ENCODE measurements at regions of chr12 and their contacts with region 1.

Region 1: GRCh38 chr12:31682136-31682962 is 22.9 kb downstream of the ETFBKMT start:
- DNase-seq: peak; percentile 80
- ATAC-seq: peak; percentile 91
- H3K4me3 Mint-ChIP-seq: no peak overlapping the region
- H3K27ac Mint-ChIP-seq: peak overlapping the region; percentile 65
- H3K4me1 Mint-ChIP-seq: peaks cover 12% of the 10 kb centered on the region
- H3K27me3 Mint-ChIP-seq: no peaks in the 10 kb centered on the region

Region 2: GRCh38 chr12:31029916-31030562 is 652.3 kb before region 1 on chr12:
- CTCF ChIA-PET with region 1: no interaction called
- DNase-seq: peak; percentile 35
- ATAC-seq: no peak
- H3K4me3 Mint-ChIP-seq: no peak overlapping the region
- H3K27ac Mint-ChIP-seq: no peak overlapping the region
- H3K4me1 Mint-ChIP-seq: no peaks in the 10 kb centered on the region
- H3K27me3 Mint-ChIP-seq: peaks cover 10% of the 10 kb centered on the region

Region 3: GRCh38 chr12:31589904-31590641 is 92.3 kb before region 1 on chr12:
- CTCF ChIA-PET with region 1: no interaction called
- DNase-seq: no peak
- ATAC-seq: peak; percentile 43
- H3K4me3 Mint-ChIP-seq: peak overlapping the region; percentile 62
- H3K27ac Mint-ChIP-seq: no peak overlapping the region
- H3K4me1 Mint-ChIP-seq: peaks cover 10% of the 10 kb centered on the region
- H3K27me3 Mint-ChIP-seq: peaks cover 52% of the 10 kb centered on the region

Region 4: DNA sequence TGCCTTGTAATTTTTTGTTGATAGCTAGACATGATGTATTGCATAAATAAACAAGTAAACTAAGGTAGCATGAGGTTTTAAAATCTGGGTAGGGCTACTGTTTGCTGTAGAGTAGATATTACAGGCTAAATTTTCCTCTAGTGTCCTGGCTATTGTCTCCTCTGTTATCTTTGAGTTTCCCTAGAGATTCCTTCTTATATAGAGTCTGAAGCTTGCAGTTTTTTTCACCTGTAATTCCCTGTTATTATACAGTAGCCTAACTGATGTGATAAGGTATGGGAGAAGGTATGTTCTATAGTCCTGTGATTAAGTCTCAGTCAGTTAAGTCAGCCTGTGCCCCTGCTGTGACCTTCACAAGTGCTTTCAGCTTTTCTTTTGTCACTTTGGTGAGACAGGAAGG is 13.3 kb before region 1 on chr12:
- CTCF ChIA-PET with region 1: interaction called, 11 read pairs
- DNase-seq: no peak
- ATAC-seq: no peak
- H3K4me3 Mint-ChIP-seq: no peak overlapping the region
- H3K27ac Mint-ChIP-seq: no peak overlapping the region
- H3K4me1 Mint-ChIP-seq: no peaks in the 10 kb centered on the region
- H3K27me3 Mint-ChIP-seq: no peaks in the 10 kb centered on the region

Region 5: DNA sequence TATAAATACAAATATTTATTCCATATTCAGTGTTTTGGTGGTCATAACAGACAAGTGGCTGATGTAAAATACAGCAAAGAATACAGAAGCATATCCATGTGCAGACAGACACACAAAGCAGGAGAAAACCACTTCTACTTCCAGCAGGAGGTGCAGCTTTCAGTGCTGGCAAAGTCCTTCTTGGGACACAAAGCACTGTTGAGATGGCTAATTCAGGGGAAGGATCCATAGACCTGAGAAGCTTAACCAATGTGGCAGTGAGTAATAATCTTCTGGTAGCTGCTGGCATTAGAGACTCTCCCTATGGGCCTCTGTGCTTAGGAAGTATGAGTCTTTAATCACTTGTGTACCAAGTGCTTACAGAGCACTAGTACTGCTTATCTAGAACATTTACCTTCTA is 19.7 kb after region 1 on chr12:
- CTCF ChIA-PET with region 1: interaction called, 10 read pairs
- DNase-seq: no peak
- ATAC-seq: no peak
- H3K4me3 Mint-ChIP-seq: no peak overlapping the region
- H3K27ac Mint-ChIP-seq: no peak overlapping the region
- H3K4me1 Mint-ChIP-seq: no peaks in the 10 kb centered on the region
- H3K27me3 Mint-ChIP-seq: no peaks in the 10 kb centered on the region

Region 6: GRCh38 chr12:31843398-31844095 is 161.2 kb after region 1 on chr12:
- CTCF ChIA-PET with region 1: no interaction called
- DNase-seq: no peak
- ATAC-seq: no peak
- H3K4me3 Mint-ChIP-seq: no peak overlapping the region
- H3K27ac Mint-ChIP-seq: no peak overlapping the region
- H3K4me1 Mint-ChIP-seq: no peaks in the 10 kb centered on the region
- H3K27me3 Mint-ChIP-seq: no peaks in the 10 kb centered on the region